IMR-90 (cell line): ENCODE measurements at regions of chr6 and their contacts with region 1.

Region 1: DNA sequence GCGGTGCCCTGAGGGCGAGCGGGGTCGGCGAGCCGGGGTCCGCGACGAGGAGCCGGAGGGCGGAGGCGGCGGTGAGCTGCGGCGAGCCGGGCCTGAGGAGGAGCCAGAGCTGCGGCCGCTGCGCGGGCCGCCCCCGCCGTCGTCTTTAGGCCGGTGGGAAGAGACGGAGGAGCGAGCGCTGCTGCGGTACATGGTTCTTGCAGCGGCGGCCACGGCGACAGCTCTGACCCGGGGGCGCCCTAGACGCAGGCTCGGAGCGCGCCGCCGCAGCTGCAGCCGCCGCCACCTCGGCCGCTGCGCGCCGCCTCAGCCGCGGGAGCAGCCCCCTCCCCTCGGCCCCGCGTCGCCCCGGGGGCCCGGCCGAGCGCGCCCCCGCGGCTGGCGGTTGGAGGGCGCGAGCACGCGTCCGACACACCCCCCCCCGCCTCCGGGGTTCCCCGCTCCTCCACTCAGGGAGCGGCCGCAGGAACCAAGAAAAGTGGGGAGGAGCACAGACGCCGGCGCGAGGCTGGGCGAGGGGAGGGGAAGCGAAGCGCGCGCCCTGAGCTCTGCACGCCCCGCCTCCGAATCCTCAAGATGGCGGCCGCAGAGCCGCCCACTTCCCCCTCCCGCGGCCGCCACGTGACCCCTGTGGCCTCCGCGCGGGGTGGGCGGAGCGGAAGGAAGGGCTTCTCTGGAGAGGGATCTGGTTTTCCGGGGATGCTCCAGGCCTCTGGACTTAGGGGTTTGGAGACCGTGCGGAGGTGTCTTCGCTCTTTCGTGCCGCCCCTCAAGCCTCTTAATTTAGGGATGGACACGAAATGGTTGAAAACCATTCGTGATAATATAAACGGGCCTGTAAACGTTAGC is at the start of gene ZNF318:
- DNase-seq: peak; percentile 96
- ATAC-seq: peak; percentile 97
- H3K4me3 ChIP-seq: peak within 1 kb of the TSS; percentile 69
- H3K27ac ChIP-seq: peak within 1 kb of the TSS; percentile 83
- H3K4me1 ChIP-seq: peaks cover 3% of the 10 kb centered on the region; the same call in 1 of the 2 replicates
- H3K27me3 ChIP-seq: no peaks in the 10 kb centered on the region
- CTCF ChIP-seq: no peak
- POLR2A ChIP-seq: peak; percentile 55; the same call in 1 of the 2 replicates
- RAD21 ChIP-seq: no peak
- total RNA-seq, gene ZNF318: 5.6 and 5.7 TPM in 2 replicates

Region 2: DNA sequence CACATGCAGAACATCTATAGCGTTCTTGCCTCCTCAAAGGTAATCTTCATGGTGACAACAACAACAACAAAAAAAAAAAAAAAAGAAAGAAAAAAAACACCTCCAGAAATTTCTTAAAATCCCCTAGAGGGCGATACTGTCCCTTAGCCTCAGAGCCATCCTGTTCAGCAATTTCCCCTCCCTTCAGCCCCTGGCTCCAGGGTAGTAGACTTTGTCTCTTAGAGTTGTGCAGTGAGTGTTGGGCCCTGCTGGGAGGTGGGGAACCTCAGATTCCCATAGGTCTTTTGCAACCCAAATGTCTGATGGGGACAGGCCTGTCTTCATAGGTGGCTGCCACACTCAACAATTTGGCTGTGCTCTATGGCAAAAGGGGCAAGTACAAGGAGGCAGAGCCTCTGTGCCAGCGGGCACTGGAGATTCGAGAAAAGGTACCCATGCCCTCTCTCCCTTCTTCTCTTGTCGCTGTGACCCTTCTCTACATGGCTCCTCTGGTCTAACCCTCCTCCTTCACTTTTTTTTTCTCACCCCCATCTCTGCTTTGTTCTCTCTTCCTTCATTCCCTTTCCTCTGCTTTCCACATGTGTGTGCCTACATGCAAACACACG is 299.3 kb before region 1 on chr6:
- CTCF ChIA-PET with region 1: no interaction called
- POLR2A ChIA-PET with region 1: no interaction called
- dilution Hi-C with region 1: no loop called
- in situ Hi-C with region 1: no loop called
- intact Hi-C with region 1: loop called (anchors 5 kb)
- DNase-seq: peak; percentile 76
- ATAC-seq: peak; percentile 89
- H3K4me3 ChIP-seq: no peak overlapping the region
- H3K27ac ChIP-seq: no peak overlapping the region
- H3K4me1 ChIP-seq: peaks cover 12% of the 10 kb centered on the region
- H3K27me3 ChIP-seq: no peaks in the 10 kb centered on the region
- CTCF ChIP-seq: peak; percentile 87
- POLR2A ChIP-seq: no peak
- RAD21 ChIP-seq: peak; percentile 90

Region 3: DNA sequence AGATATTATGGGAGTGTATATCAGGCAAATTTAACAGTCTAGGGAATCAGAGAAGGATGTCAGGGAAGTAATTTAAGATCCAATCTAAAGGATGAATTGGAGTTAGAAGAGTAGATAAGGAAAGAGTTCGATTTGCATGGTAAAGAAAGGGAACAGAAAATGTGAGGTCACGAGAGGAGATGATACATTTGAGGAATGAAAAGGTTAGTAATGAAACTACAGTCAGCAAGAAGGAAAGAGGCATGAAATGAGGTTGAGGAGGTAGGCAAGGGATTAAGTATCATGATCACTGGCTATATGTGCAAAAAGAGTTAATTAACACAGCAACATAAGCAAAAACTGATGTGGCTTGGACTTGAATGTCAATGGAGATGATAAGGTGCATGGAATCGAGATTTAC is 22.4 kb before region 1 on chr6:
- CTCF ChIA-PET with region 1: no interaction called
- POLR2A ChIA-PET with region 1: no interaction called
- dilution Hi-C with region 1: no loop called
- in situ Hi-C with region 1: no loop called
- intact Hi-C with region 1: no loop called
- DNase-seq: no peak
- ATAC-seq: no peak
- H3K4me3 ChIP-seq: no peak overlapping the region
- H3K27ac ChIP-seq: no peak overlapping the region
- H3K4me1 ChIP-seq: no peaks in the 10 kb centered on the region
- H3K27me3 ChIP-seq: no peaks in the 10 kb centered on the region
- CTCF ChIP-seq: no peak
- POLR2A ChIP-seq: no peak
- RAD21 ChIP-seq: no peak

Region 4: DNA sequence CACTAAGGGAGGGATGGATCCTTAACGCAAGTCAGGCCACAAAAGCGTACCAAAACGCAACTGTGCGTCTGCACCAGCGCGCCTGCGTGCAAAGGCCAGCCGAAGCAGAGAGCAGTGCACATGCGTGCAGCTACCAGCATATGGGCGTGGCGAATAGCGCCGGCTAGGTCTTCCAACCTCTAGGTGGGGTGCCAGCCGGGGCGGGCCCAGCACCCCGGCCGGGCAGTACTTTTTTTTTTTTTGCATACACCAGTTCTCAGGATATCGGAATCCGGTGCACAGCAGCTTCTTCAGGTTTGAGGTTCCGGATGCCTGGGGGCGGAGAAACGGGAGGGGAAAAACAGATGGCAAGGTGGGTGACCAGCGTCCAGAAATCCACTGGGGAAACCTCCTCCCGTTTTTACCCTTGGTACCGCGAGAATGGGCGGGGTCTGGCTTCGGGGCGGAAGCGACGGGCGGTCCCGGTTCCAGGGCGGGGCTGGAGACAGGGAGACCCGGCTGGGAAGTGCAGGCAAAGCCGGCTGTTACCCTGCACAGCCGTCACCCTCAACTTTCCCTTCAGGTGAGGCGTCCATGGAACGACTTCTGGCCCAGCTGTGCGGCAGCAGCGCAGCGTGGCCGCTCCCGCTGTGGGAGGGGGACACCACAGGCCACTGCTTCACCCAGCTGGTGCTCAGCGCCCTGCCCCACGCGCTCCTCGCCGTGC is 58.2 kb after region 1 on chr6 and contains the start of gene ABCC10:
- CTCF ChIA-PET with region 1: no interaction called
- POLR2A ChIA-PET with region 1: no interaction called
- dilution Hi-C with region 1: no loop called
- in situ Hi-C with region 1: no loop called
- intact Hi-C with region 1: loop called (anchors 2 kb)
- DNase-seq: peak; percentile 95
- ATAC-seq: peak; percentile 97
- H3K4me3 ChIP-seq: peak within 1 kb of the TSS; percentile 75
- H3K27ac ChIP-seq: peak within 1 kb of the TSS; percentile 76
- H3K4me1 ChIP-seq: peaks cover 5% of the 10 kb centered on the region
- H3K27me3 ChIP-seq: no peaks in the 10 kb centered on the region; the same call in 1 of the 2 replicates
- CTCF ChIP-seq: peak; percentile 36; the same call in 1 of the 2 replicates
- POLR2A ChIP-seq: no peak; the same call in 1 of the 2 replicates
- RAD21 ChIP-seq: no peak
- total RNA-seq, gene ABCC10: 4.7 and 7.0 TPM in 2 replicates

Region 5: GRCh38 chr6:43790025-43790523 is 420.7 kb after region 1 on chr6:
- CTCF ChIA-PET with region 1: no interaction called
- POLR2A ChIA-PET with region 1: no interaction called
- dilution Hi-C with region 1: no loop called
- in situ Hi-C with region 1: no loop called
- intact Hi-C with region 1: no loop called
- DNase-seq: no peak
- ATAC-seq: peak; percentile 31
- H3K4me3 ChIP-seq: no peak overlapping the region
- H3K27ac ChIP-seq: no peak overlapping the region
- H3K4me1 ChIP-seq: peaks cover 11% of the 10 kb centered on the region; the same call in 1 of the 2 replicates
- H3K27me3 ChIP-seq: no peaks in the 10 kb centered on the region
- CTCF ChIP-seq: no peak
- POLR2A ChIP-seq: no peak
- RAD21 ChIP-seq: no peak

Region 6: GRCh38 chr6:44161997-44162338 is 792.6 kb after region 1 on chr6:
- CTCF ChIA-PET with region 1: no interaction called
- POLR2A ChIA-PET with region 1: no interaction called
- dilution Hi-C with region 1: no loop called
- in situ Hi-C with region 1: no loop called
- intact Hi-C with region 1: no loop called
- DNase-seq: peak; percentile 67
- ATAC-seq: peak; percentile 38
- H3K4me3 ChIP-seq: no peak overlapping the region
- H3K27ac ChIP-seq: no peak overlapping the region
- H3K4me1 ChIP-seq: no peaks in the 10 kb centered on the region
- H3K27me3 ChIP-seq: peaks cover 26% of the 10 kb centered on the region
- CTCF ChIP-seq: no peak
- POLR2A ChIP-seq: no peak
- RAD21 ChIP-seq: no peak